Activated CD4-positive, alpha-beta memory T cell treated with anti-CD3 and anti-CD28 coated beads for 36 hours (primary cell): ENCODE measurements at regions of chr4 and their contacts with region 1.

Region 1: DNA sequence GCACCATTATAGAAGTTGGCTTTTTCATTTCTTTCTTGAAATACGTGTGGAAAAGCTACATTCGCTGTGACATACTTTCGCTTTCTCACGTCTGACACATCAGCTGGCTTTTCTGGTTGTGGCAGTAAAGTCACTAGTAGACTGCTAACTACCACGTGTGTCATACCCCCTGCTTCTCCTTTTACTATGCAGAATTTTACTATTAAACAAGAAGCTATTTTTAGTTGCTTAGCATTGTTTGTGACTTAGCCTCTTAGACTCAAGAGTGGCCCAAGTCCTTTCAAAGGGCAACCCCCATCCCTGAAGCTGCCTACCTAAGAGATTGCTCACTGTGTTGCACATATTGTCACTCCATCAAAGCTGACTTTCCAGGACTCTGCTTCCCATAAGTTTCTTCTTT is 2.1 kb upstream of the IL2 start:
- DNase-seq: peak; percentile 75
- H3K4me3 Mint-ChIP-seq: peak overlapping the region; percentile 71
- H3K27ac Mint-ChIP-seq: peak overlapping the region; percentile 97
- H3K4me1 Mint-ChIP-seq: peaks cover 44% of the 10 kb centered on the region
- H3K27me3 Mint-ChIP-seq: no peaks in the 10 kb centered on the region

Region 2: GRCh38 chr4:121950212-121950679 is 508.4 kb before region 1 on chr4:
- CTCF ChIA-PET with region 1: no interaction called
- POLR2A ChIA-PET with region 1: no interaction called
- intact Hi-C with region 1: loop called (anchors 1 kb)
- DNase-seq: peak; percentile 91
- H3K4me3 Mint-ChIP-seq: peak overlapping the region; percentile 89
- H3K27ac Mint-ChIP-seq: peak overlapping the region; percentile 19
- H3K4me1 Mint-ChIP-seq: peaks cover 9% of the 10 kb centered on the region
- H3K27me3 Mint-ChIP-seq: peaks cover 15% of the 10 kb centered on the region

Region 3: GRCh38 chr4:122469457-122469856 is 10.8 kb after region 1 on chr4:
- CTCF ChIA-PET with region 1: no interaction called
- POLR2A ChIA-PET with region 1: no interaction called
- intact Hi-C with region 1: loop called (anchors 1 kb)
- DNase-seq: no peak
- H3K4me3 Mint-ChIP-seq: no peak overlapping the region
- H3K27ac Mint-ChIP-seq: no peak overlapping the region
- H3K4me1 Mint-ChIP-seq: peaks cover 21% of the 10 kb centered on the region
- H3K27me3 Mint-ChIP-seq: no peaks in the 10 kb centered on the region

Region 4: GRCh38 chr4:122508083-122508482 is 49.5 kb after region 1 on chr4:
- CTCF ChIA-PET with region 1: interaction called, 3 read pairs
- POLR2A ChIA-PET with region 1: interaction called, 8 read pairs
- intact Hi-C with region 1: loop called (anchors 1 kb)
- DNase-seq: no peak
- H3K4me3 Mint-ChIP-seq: peak overlapping the region; percentile 59
- H3K27ac Mint-ChIP-seq: peak overlapping the region; percentile 87
- H3K4me1 Mint-ChIP-seq: peaks cover 73% of the 10 kb centered on the region
- H3K27me3 Mint-ChIP-seq: no peaks in the 10 kb centered on the region

Region 5: DNA sequence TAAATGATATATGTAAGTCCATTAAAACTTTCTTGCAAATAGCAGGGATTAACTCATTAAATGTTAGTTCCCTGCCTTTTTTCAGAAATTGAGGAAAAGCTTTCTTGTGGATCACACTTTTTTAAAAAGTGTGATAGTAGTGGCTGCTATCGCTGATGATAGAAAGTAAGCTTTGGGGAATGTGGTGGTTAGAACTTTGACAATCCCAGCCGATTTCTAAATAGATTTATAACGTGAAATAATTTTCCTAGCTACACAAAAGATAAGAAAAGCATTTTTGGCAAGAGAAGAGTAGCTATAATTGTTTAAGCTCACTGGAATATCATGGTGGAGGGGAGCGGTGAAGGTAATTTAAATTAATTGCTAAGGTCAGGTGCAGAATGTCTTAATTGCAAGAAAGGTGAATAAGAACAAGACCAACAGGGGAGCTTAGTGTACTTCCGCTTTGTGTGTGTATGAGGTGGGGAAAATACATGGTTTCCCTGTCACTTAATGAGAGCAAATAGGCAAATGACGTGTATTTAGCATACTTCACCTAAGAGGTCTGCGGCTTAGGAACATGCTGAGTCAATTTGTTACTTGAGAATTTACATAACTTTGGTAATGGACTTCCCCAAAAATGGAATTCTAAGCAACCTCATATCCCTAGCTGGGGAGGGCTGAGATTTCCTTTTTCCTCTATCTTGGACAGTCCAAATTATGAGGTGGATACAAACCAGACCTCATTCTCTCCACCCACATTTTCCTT is 173.9 kb after region 1 on chr4:
- CTCF ChIA-PET with region 1: no interaction called
- POLR2A ChIA-PET with region 1: no interaction called
- intact Hi-C with region 1: loop called (anchors 10 kb)
- DNase-seq: no peak
- H3K4me3 Mint-ChIP-seq: peak overlapping the region; percentile 21
- H3K27ac Mint-ChIP-seq: peak overlapping the region; percentile 55
- H3K4me1 Mint-ChIP-seq: peaks cover 62% of the 10 kb centered on the region
- H3K27me3 Mint-ChIP-seq: no peaks in the 10 kb centered on the region

Region 6: GRCh38 chr4:122710434-122711308 is 252.0 kb after region 1 on chr4:
- CTCF ChIA-PET with region 1: no interaction called
- POLR2A ChIA-PET with region 1: no interaction called
- intact Hi-C with region 1: loop called (anchors 5 kb)
- DNase-seq: peak; percentile 73
- H3K4me3 Mint-ChIP-seq: peak overlapping the region; percentile 60
- H3K27ac Mint-ChIP-seq: peak overlapping the region; percentile 94
- H3K4me1 Mint-ChIP-seq: peaks cover 72% of the 10 kb centered on the region
- H3K27me3 Mint-ChIP-seq: no peaks in the 10 kb centered on the region